Calu3 (cell line): ENCODE measurements at regions of chr5 and their contacts with region 1.

Region 1: GRCh38 chr5:11619339-11620024 is 284.8 kb downstream of the CTNND2 start:
- DNase-seq: peak; percentile 18
- H3K4me3 Mint-ChIP-seq: no peak overlapping the region
- H3K27ac Mint-ChIP-seq: no peak overlapping the region
- H3K4me1 Mint-ChIP-seq: peaks cover 13% of the 10 kb centered on the region
- H3K27me3 Mint-ChIP-seq: no peaks in the 10 kb centered on the region
- CTCF ChIP-seq: no peak

Region 2: DNA sequence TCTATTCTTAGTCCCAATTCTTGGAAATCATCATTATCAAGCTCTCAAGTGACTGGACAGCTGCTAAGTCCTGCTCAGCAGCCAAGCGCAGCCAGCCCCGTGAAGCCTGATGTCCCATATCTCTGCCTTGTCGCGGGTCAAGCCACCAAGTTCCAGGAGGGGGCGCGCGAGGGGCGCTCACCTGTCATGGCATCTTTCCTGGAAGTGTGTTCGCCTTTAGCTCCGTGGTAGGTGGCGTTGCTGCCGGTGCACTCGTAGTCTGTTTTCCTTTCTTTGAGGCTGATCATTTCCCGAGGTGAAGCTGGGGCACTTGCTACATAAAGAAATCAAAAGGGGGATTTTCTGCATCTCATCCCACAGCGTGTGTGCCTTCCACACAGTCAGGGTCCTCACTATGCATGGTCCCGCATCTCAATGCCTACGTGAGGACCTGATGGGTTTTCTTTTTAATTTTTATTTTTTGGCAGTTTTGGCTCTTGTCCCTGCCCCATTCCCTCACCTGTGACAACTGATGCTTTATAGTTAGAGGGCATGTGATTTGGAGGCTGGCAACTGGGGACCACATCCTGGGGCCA is 631.5 kb before region 1 on chr5:
- CTCF ChIA-PET with region 1: no interaction called
- intact Hi-C with region 1: loop called (anchors 10 kb)
- DNase-seq: peak; percentile 93
- H3K4me3 Mint-ChIP-seq: peak overlapping the region; percentile 32
- H3K27ac Mint-ChIP-seq: no peak overlapping the region
- H3K4me1 Mint-ChIP-seq: peaks cover 13% of the 10 kb centered on the region
- H3K27me3 Mint-ChIP-seq: no peaks in the 10 kb centered on the region
- CTCF ChIP-seq: peak; percentile 79

Region 3: GRCh38 chr5:11293523-11293922 is 326.0 kb before region 1 on chr5:
- CTCF ChIA-PET with region 1: no interaction called
- intact Hi-C with region 1: loop called (anchors 1 kb)
- DNase-seq: no peak
- H3K4me3 Mint-ChIP-seq: no peak overlapping the region
- H3K27ac Mint-ChIP-seq: no peak overlapping the region
- H3K4me1 Mint-ChIP-seq: peaks cover 7% of the 10 kb centered on the region
- H3K27me3 Mint-ChIP-seq: peaks cover 24% of the 10 kb centered on the region
- CTCF ChIP-seq: no peak

Region 4: DNA sequence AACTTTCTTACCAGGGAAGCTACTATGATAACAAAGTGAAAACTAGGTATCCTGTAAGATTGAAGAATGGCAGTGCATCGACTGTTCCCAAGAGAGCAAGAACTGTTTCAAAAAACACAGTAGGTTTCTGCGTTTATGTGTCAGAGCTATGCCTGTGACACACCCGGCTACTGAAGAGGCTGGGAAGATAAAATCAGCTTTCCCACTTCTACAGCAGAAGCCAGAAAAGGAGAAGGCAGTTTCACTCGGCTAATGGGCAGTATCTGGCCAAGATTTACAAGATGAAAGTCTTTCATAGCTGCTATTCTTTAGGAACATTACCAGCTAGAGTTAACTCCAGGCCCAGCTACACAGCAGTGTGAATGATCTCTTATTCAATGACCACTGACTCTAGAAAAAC is 89.5 kb after region 1 on chr5:
- CTCF ChIA-PET with region 1: no interaction called
- intact Hi-C with region 1: no loop called
- DNase-seq: no peak
- H3K4me3 Mint-ChIP-seq: no peak overlapping the region
- H3K27ac Mint-ChIP-seq: no peak overlapping the region
- H3K4me1 Mint-ChIP-seq: no peaks in the 10 kb centered on the region
- H3K27me3 Mint-ChIP-seq: no peaks in the 10 kb centered on the region
- CTCF ChIP-seq: no peak

Region 5: GRCh38 chr5:11719888-11720481 is 100.5 kb after region 1 on chr5:
- CTCF ChIA-PET with region 1: no interaction called
- intact Hi-C with region 1: loop called (anchors 10 kb)
- DNase-seq: peak; percentile 73
- H3K4me3 Mint-ChIP-seq: no peak overlapping the region
- H3K27ac Mint-ChIP-seq: no peak overlapping the region
- H3K4me1 Mint-ChIP-seq: peaks cover 3% of the 10 kb centered on the region
- H3K27me3 Mint-ChIP-seq: no peaks in the 10 kb centered on the region
- CTCF ChIP-seq: peak; percentile 53

Region 6: GRCh38 chr5:12023614-12024241 is 404.2 kb after region 1 on chr5:
- CTCF ChIA-PET with region 1: interaction called, 3 read pairs
- intact Hi-C with region 1: loop called (anchors 5 kb)
- DNase-seq: peak; percentile 46
- H3K4me3 Mint-ChIP-seq: no peak overlapping the region
- H3K27ac Mint-ChIP-seq: no peak overlapping the region
- H3K4me1 Mint-ChIP-seq: no peaks in the 10 kb centered on the region
- H3K27me3 Mint-ChIP-seq: no peaks in the 10 kb centered on the region
- CTCF ChIP-seq: peak; percentile 51